Mammary epithelial cell (primary cell): ENCODE measurements at regions of chr20 and their contacts with region 1.

Region 1: DNA sequence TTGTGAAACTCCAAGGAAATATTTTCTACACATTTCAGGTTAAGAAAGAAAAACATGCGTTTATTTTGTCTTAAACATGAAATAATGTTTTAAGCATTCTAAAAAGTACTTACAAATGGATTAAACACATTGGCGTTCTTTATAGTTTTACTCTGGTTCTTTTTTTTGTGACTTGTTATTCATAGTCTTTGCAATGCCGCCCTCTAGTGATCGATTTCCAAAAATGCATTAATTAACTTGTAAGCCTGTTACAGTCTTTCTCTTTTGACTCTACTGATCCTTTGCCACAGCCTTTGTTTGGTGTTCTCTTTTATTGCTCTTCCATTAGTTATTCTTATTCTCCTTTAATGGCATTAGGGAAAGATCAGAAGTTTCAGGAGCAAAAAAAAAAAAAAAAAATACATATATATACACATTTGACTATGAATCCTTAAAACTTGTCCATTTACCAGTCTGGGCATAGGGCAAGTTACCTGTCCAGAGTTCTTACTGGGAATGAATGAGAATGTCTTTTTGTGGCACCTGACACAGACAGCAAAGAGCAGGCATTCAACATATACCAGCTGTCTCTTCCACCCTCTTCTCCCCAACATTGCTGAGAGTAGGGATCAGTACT is 59.9 kb downstream of the MACROD2 start:
- DNase-seq: peak; percentile 48
- H3K4me3 ChIP-seq: no peak overlapping the region
- H3K27ac ChIP-seq: no peak overlapping the region
- H3K4me1 ChIP-seq: no peaks in the 10 kb centered on the region
- H3K27me3 ChIP-seq: no peaks in the 10 kb centered on the region
- CTCF ChIP-seq: peak; percentile 47 to 57

Region 2: GRCh38 chr20:13325033-13325432 is 730.2 kb before region 1 on chr20:
- CTCF ChIA-PET with region 1: no interaction called
- dilution Hi-C with region 1: no loop called
- in situ Hi-C with region 1: no loop called
- intact Hi-C with region 1: loop called (anchors 10 kb)
- DNase-seq: no peak
- H3K4me3 ChIP-seq: no peak overlapping the region
- H3K27ac ChIP-seq: no peak overlapping the region
- H3K4me1 ChIP-seq: no peaks in the 10 kb centered on the region
- H3K27me3 ChIP-seq: no peaks in the 10 kb centered on the region
- CTCF ChIP-seq: peak; percentile 37 to 72

Region 3: DNA sequence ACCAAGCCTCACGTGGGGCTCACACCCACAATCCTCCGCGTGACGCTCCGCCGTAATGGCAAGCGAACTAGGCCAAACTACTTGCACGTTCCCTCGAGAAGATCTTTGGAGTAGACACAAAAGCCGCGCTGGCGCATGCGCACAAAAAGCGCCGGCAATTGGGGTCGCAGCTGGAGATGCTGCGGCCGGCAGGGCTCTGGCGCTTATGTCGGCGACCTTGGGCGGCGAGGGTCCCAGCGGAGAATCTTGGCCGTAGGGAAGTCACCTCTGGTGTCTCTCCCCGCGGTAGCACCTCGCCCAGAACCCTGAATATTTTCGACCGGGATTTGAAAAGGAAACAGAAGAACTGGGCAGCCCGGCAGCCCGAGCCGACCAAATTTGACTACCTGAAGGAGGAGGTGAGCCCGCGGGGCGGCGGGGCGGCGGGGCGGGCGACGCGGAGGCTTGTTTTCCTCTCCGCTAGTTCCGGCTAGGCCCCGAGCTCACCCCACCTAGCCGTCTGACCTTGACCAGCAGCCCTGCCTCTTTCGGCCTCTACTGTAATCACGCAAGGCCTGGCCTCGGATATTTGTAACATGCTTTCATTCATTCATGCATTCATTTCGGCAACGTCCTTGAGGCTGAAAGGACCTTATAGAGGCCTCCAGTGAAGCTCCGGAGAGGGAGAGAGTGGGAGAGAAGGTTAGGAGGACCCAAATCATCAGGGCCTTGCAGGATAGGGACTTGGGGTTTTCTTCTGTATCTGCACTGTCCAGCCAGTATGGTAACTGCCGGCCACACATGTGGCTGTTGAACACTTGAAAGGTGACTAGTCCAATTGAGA is 270.1 kb before region 1 on chr20 and contains the starts of genes ESF1 and NDUFAF5:
- CTCF ChIA-PET with region 1: no interaction called
- dilution Hi-C with region 1: no loop called
- in situ Hi-C with region 1: no loop called
- intact Hi-C with region 1: loop called (anchors 1 kb)
- DNase-seq: peak; percentile 97
- H3K4me3 ChIP-seq: peak within 1 kb of the TSS; percentile 86 to 95 (median 87)
- H3K27ac ChIP-seq: peak within 1 kb of the TSS; percentile 74
- H3K4me1 ChIP-seq: peaks cover 18% of the 10 kb centered on the region
- H3K27me3 ChIP-seq: no peaks in the 10 kb centered on the region
- CTCF ChIP-seq: no peak
- total RNA-seq, gene ESF1: 6.7 to 16.2 TPM
- total RNA-seq, gene NDUFAF5: 10.8 to 34.7 TPM

Region 4: GRCh38 chr20:13819885-13820645 is 235.2 kb before region 1 on chr20:
- CTCF ChIA-PET with region 1: no interaction called
- dilution Hi-C with region 1: no loop called
- in situ Hi-C with region 1: loop called (anchors 5 to 10 kb)
- intact Hi-C with region 1: loop called (anchors 1 kb)
- DNase-seq: peak; percentile 74
- H3K4me3 ChIP-seq: no peak overlapping the region
- H3K27ac ChIP-seq: no peak overlapping the region
- H3K4me1 ChIP-seq: no peaks in the 10 kb centered on the region
- H3K27me3 ChIP-seq: no peaks in the 10 kb centered on the region
- CTCF ChIP-seq: peak; percentile 55 to 56

Region 5: DNA sequence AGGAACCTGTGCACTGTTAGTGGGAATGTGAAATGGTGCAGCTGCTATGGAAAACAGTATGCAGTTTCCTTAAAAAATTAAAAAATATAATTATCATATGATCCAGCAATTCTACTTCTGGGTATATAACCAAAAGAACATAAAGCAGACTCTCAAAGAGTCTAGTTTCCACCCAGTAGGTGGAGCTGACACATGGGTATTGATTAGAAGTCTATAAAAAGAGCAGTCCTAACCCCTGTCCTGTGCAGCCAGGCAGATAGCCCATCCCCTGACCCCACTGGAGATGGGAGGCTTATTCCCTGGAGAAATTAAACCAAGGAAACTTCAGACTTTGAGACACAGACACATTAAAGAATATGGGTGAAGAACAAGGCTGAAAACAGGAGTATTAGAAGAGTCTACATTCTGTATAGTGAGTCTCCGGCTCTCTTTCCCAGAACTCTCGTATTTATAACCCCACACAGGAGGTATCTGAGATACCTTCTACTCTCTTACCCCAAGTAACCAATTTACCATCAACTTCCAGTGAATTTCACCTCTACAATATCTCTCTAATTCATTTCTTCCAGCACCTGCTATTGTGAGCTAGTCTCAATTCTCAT is 157.1 kb before region 1 on chr20:
- CTCF ChIA-PET with region 1: no interaction called
- dilution Hi-C with region 1: no loop called
- in situ Hi-C with region 1: no loop called
- intact Hi-C with region 1: loop called (anchors 1 kb)
- DNase-seq: peak; percentile 3
- H3K4me3 ChIP-seq: no peak overlapping the region
- H3K27ac ChIP-seq: no peak overlapping the region
- H3K4me1 ChIP-seq: no peaks in the 10 kb centered on the region
- H3K27me3 ChIP-seq: no peaks in the 10 kb centered on the region
- CTCF ChIP-seq: peak; percentile 12 to 34

Region 6: GRCh38 chr20:14142171-14142570 is 86.9 kb after region 1 on chr20:
- CTCF ChIA-PET with region 1: no interaction called
- dilution Hi-C with region 1: no loop called
- in situ Hi-C with region 1: no loop called
- intact Hi-C with region 1: no loop called
- DNase-seq: peak; percentile 66
- H3K4me3 ChIP-seq: no peak overlapping the region
- H3K27ac ChIP-seq: no peak overlapping the region
- H3K4me1 ChIP-seq: peaks cover 6% of the 10 kb centered on the region
- H3K27me3 ChIP-seq: no peaks in the 10 kb centered on the region
- CTCF ChIP-seq: peak; percentile 70 to 78

Region 7: DNA sequence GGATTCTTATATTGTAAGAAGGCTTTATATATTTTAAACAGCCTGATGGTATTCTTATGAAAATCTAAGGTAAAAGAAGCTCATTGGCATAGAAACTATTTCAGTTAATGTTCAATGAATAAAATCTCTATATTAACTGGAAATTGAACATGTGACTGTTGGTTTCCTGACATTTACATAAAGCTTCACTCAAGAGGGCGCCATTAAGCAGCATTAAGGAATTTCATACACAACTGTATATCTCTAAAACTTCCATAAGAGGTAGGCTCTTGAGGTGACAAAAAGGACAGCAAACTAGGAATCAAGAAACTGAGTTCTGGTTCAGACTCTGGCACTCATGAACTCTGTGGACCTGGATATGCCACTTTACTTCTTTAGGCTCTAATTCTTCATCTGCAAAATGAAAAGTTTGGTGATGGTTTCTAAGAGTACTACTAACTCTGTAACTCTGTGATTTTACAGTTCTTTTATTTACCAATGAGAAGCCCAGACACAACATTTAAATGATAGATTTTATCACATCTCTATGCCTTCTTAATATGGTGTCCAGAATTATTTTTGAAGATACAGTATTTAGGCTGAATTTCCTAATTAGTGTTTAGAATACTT is 134.7 kb after region 1 on chr20:
- CTCF ChIA-PET with region 1: no interaction called
- dilution Hi-C with region 1: no loop called
- in situ Hi-C with region 1: no loop called
- intact Hi-C with region 1: no loop called
- DNase-seq: peak; percentile 44
- H3K4me3 ChIP-seq: no peak overlapping the region
- H3K27ac ChIP-seq: no peak overlapping the region
- H3K4me1 ChIP-seq: peaks cover 5% of the 10 kb centered on the region
- H3K27me3 ChIP-seq: no peaks in the 10 kb centered on the region
- CTCF ChIP-seq: peak; percentile 52 to 65